Thyroid gland (tissue), 4 donors: ENCODE measurements at regions of chr13 and their contacts with region 1.

Region 1: DNA sequence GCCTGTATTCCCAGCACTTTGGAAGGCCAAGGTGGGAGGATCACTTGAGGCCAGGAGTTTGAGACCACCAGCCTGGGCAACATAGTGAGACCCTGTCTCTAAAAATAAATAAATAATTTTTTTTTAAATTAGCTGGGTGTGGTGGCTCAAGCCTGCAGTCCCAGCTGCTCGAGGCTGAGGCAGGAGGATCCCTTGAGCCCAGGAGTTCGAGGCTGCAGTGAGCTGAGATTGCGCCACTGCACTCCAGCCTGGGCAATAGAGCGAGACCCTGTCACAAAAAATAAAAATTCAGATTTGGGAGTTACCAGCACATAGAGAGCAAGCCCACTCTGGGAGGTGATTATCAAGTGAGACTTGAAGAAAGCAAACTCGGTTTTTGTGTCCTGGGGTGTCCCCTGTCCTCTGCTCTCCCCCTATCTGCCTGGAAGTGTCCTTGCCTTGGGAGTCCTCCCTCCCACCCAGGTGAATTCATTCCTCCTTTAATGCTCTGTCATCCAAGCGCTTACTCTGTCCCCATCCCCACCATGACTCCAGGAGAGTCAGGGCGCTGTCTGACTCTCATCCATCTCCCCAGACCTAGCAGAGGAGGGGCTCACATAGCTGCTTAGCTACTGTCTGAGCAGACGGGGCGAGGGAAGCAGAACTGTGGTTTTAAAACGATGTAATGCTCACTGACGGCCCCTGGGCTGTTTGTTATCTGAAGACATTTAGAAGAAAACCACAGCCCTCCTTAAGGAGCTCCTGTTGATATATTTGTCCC is 146.8 kb downstream of the STK24 start:
- DNase-seq: no peak
- H3K4me3 ChIP-seq: no peak overlapping the region
- H3K27ac ChIP-seq: peak overlapping the region in 1 of 3 donors; percentile 58
- H3K4me1 ChIP-seq: peaks cover 4% of the 10 kb centered on the region in 2 donors
- H3K27me3 ChIP-seq: no peaks in the 10 kb centered on the region
- CTCF ChIP-seq: peak in 1 of 6 experiments; percentile 12
- POLR2A ChIP-seq: no peak

Region 2: DNA sequence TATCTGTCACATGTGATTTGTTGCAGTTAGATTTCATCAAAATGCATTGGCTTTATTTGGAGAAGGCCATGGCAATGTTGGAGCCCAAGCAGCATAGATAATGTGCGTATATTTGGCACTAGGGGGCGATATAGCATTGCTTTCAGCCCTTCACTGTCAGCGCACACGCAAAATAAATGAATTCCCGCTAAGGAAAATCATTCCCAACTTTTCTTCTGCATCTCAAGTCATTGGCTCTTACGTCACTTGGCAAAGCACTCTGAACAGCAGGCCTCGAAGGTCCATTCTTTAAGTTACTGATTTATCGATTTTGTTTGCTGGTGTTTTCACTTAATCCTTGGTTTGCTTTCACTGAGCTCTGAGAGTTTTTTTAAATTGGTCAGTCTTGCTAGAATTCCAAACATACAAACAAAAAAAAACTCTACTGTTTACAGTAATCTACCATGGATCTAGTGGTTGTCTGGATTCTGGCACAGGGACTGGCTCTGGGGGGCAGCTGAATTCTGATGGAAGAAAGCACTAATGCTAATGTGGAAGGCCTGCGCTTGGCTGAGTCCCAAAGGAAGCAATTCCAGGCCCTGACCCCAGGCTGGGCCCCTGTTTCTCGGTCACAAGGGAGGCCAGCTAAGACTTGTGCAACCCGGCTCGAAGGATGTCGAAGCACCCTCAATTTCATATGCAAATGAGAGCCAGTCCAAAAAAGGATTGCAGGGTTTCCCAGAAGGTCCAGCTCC is 574.4 kb before region 1 on chr13:
- intact Hi-C with region 1: loop called (anchors 5 kb)
- DNase-seq: peak; percentile 14 to 46
- H3K4me3 ChIP-seq: no peak overlapping the region
- H3K27ac ChIP-seq: no peak overlapping the region
- H3K4me1 ChIP-seq: no peaks in the 10 kb centered on the region
- H3K27me3 ChIP-seq: no peaks in the 10 kb centered on the region
- CTCF ChIP-seq: peak; percentile 52 to 89 (median 74)
- POLR2A ChIP-seq: no peak

Region 3: GRCh38 chr13:98033277-98034247 is 396.6 kb before region 1 on chr13:
- intact Hi-C with region 1: loop called (anchors 10 kb)
- DNase-seq: peak; percentile 48
- H3K4me3 ChIP-seq: no peak overlapping the region
- H3K27ac ChIP-seq: no peak overlapping the region
- H3K4me1 ChIP-seq: no peaks in the 10 kb centered on the region
- H3K27me3 ChIP-seq: no peaks in the 10 kb centered on the region
- CTCF ChIP-seq: peak in 4 of 6 experiments; percentile 4 to 54 (median 44)
- POLR2A ChIP-seq: no peak

Region 4: GRCh38 chr13:98142380-98143156 is 287.6 kb before region 1 on chr13 and contains the start of gene FARP1:
- intact Hi-C with region 1: loop called (anchors 5 kb)
- DNase-seq: peak; percentile 87
- H3K4me3 ChIP-seq: peak within 1 kb of the TSS; percentile 61 to 84 (median 64)
- H3K27ac ChIP-seq: peak within 1 kb of the TSS; percentile 52 to 87 (median 72)
- H3K4me1 ChIP-seq: peaks cover 23 to 30% of the 10 kb centered on the region in 2 donors
- H3K27me3 ChIP-seq: no peaks in the 10 kb centered on the region
- CTCF ChIP-seq: peak in 3 of 6 experiments; percentile 85 to 92 (median 87)
- POLR2A ChIP-seq: peak; percentile 46 to 84
- total RNA-seq, gene FARP1: 103 to 172 (median 129) TPM

Region 5: GRCh38 chr13:98721825-98722510 is 291.8 kb after region 1 on chr13:
- intact Hi-C with region 1: no loop called
- DNase-seq: no peak
- H3K4me3 ChIP-seq: no peak overlapping the region
- H3K27ac ChIP-seq: no peak overlapping the region
- H3K4me1 ChIP-seq: no peaks in the 10 kb centered on the region
- H3K27me3 ChIP-seq: no peaks in the 10 kb centered on the region
- CTCF ChIP-seq: no peak
- POLR2A ChIP-seq: no peak